Common myeloid progenitor, CD34-positive (primary cell): ENCODE measurements at regions of chr19 and their contacts with region 1.

Region 1: DNA sequence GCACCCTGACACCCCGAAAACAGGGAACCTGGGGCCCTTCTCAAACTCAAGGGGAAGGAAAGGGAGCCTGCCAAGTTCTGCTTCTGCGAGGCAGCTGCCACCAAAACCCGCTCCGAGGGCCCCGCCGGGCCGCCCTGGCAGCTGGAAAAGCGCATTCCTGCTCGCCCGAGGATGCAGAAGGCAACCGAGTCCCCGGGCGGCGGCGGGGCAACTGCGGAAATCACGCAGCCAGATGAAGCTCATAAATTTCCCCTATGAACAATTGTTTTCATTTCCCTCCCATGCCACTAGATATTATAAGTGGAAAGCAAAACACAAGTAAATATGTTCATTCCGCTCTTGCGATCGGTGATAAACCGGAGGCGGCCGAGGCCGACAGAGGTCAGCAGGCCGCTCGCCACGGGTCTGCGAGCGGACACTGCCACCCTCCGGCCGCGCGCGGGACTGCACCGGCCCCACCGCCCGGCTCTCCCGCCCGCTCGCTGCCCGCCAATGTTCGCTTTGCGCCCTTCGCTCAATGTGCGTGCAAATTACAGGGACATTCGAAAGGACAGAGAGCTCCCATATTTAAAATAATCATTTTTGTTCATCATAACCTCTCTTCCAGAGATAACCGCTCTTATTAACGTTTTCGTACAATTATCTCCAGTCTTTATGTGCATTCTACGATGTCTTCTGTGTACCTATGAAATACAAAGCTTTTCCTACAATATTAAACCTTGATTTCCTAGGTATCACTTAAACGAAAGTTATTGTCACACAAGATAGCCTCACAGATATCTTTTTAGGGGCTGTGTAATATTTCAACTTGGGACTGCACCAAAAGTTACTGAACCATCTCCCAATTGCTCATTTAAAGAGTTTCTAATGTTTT is 120.8 kb upstream of the ZNF507 start:
- DNase-seq: peak; percentile 78 to 89 (median 81)
- H3K4me3 ChIP-seq: peak overlapping the region in 6 of 7 experiments; percentile 19 to 73 (median 47)
- H3K27ac ChIP-seq: no peak overlapping the region
- H3K4me1 ChIP-seq: peaks cover 0 to 32% (median 18%) of the 10 kb centered on the region in 4 experiments
- H3K27me3 ChIP-seq: peaks cover 2 to 15% (median 4%) of the 10 kb centered on the region in 5 experiments

Region 2: DNA sequence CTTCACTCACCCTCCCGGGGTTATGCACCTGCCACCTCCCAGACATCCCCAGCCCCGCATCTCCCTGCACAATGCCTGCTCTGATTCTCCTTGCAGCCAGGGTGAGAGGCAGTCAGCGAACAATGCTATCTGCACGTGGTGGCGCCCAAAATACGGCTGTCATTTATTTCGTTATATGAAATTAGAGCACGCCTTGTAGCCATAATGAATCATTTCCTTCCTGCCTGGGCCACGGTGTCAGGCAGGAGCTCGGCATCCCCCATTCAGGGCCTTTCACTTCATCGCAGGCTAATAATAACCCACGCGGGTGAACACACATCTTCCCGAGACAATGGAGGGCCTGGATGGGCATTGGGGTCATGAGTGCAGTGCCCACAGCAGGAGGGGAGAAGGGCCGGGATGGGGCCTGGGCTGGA is 23.0 kb before region 1 on chr19:
- CTCF ChIA-PET with region 1: interaction called, 17 read pairs
- POLR2A ChIA-PET with region 1: interaction called, 5 read pairs
- DNase-seq: peak; percentile 69 to 92 (median 87)
- H3K4me3 ChIP-seq: peak overlapping the region in 2 of 7 experiments; percentile 29 to 41
- H3K27ac ChIP-seq: no peak overlapping the region
- H3K4me1 ChIP-seq: peaks cover 0 to 18% (median 15%) of the 10 kb centered on the region in 4 experiments
- H3K27me3 ChIP-seq: no peaks in the 10 kb centered on the region